ENCODE measurements at regions of chr14 and their contacts with region 1.

Region 1: GRCh38 chr14:99982537-99983250 is 82.5 kb upstream of the EVL start:
- DNase-seq: no peak
- ATAC-seq: peak; percentile 99
- H3K4me3 ChIP-seq: no peak overlapping the region
- H3K27ac ChIP-seq: no peak overlapping the region
- H3K4me1 ChIP-seq: no peaks in the 10 kb centered on the region
- H3K27me3 ChIP-seq: no peaks in the 10 kb centered on the region
- CTCF ChIP-seq: peak; percentile 89

Region 2: GRCh38 chr14:100108042-100108825 is 125.5 kb after region 1 on chr14:
- intact Hi-C with region 1: loop called (anchors 10 kb)
- DNase-seq: peak; percentile 90
- ATAC-seq: peak; percentile 80
- H3K4me3 ChIP-seq: no peak overlapping the region
- H3K27ac ChIP-seq: peak overlapping the region; percentile 72
- H3K4me1 ChIP-seq: peaks cover 52% of the 10 kb centered on the region
- H3K27me3 ChIP-seq: no peaks in the 10 kb centered on the region
- CTCF ChIP-seq: peak; percentile 91

Region 3: GRCh38 chr14:100192672-100193416 is 210.2 kb after region 1 on chr14:
- intact Hi-C with region 1: loop called (anchors 5 kb)
- DNase-seq: peak; percentile 100
- ATAC-seq: peak; percentile 99
- H3K4me3 ChIP-seq: peak overlapping the region; percentile 52
- H3K27ac ChIP-seq: peak overlapping the region; percentile 96
- H3K4me1 ChIP-seq: peaks cover 17% of the 10 kb centered on the region
- H3K27me3 ChIP-seq: no peaks in the 10 kb centered on the region
- CTCF ChIP-seq: peak; percentile 91

Region 4: GRCh38 chr14:100341301-100342031 is 358.8 kb after region 1 on chr14:
- intact Hi-C with region 1: no loop called
- DNase-seq: peak; percentile 61
- ATAC-seq: peak; percentile 91
- H3K4me3 ChIP-seq: no peak overlapping the region
- H3K27ac ChIP-seq: peak overlapping the region; percentile 77
- H3K4me1 ChIP-seq: peaks cover 20% of the 10 kb centered on the region
- H3K27me3 ChIP-seq: no peaks in the 10 kb centered on the region
- CTCF ChIP-seq: no peak